KBM-7 (cell line): ENCODE measurements at regions of chr13 and their contacts with region 1.

Region 1: DNA sequence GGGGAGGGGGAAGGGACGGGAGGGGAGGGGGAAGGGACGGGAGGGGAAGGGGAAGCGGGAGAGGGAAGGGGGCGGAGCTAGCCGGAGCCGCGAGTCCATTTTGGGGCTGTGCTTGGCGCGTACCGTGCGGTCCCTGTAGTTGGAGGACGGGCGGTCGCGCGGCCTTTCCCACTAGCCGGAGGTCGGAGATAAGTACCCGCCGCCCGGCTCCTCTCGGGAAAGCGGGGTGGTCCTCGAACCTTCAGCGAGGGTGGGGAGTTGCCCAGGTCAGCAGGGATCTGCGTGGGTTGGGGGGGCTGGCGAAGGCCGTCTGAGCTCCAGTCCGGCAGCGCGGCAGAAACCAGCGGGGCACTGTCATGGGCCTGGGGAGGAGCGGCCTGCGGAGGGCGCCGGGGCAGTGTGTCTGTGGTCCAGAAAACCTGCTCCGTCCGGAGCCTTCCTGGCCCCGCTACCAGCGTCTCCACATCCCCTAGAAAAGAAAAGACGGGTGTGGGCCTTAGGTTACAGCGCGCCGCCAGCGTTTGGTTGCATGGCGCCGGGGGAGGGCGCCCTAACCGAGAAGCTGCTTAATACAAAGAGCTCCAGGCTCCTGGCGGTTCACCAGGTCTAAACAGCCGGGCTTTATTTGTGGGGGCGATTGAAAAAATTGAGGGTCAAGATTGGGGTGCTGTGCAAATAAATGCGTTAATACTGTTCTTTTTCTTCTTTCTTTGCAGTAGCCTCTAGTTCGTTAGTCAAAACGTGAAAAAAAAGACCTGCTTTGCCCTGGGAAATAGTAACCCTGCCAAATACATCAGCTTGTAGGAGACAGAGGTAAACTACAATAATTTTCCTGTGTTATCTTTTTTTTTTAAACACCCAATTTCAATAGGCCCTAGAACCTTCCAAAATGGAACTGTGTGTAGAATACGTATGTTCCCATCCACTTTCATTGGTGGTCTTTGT is at the start of gene TRIM13:
- DNase-seq: peak; percentile 92

Region 2: DNA sequence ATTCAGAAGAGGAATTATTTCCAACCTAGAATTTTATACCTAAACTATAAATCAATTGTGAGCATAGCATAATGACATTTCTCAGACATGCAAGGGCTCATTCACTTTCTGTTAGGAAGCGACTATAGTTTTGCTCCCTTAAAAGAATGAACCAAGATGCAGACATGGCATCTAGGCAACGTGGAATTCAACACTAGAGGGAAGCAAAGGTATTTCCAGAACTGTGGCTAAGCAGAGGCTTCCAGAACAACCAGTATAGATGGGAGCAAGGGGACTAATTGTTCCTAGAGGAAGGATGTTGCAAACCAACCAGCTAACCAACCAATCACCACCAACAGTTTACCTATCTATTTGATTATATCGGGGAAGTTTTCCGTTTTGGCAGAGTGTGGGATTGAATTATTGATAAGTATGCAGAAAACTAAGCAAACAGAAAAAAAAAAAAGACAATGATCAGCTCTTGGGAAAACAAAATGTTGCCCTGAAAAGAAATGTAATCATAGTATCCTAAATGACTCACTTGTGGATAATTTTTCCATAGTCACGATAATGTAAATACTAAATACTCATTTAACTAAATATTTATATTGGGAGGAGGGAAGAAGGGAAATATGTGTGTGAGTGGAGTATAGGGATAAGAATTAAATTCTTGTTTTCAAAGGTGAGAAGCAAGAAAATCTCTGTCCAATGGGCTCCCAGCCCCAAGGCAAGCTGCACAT is 347.8 kb before region 1 on chr13:
- in situ Hi-C with region 1: no loop called
- DNase-seq: peak; percentile 32

Region 3: DNA sequence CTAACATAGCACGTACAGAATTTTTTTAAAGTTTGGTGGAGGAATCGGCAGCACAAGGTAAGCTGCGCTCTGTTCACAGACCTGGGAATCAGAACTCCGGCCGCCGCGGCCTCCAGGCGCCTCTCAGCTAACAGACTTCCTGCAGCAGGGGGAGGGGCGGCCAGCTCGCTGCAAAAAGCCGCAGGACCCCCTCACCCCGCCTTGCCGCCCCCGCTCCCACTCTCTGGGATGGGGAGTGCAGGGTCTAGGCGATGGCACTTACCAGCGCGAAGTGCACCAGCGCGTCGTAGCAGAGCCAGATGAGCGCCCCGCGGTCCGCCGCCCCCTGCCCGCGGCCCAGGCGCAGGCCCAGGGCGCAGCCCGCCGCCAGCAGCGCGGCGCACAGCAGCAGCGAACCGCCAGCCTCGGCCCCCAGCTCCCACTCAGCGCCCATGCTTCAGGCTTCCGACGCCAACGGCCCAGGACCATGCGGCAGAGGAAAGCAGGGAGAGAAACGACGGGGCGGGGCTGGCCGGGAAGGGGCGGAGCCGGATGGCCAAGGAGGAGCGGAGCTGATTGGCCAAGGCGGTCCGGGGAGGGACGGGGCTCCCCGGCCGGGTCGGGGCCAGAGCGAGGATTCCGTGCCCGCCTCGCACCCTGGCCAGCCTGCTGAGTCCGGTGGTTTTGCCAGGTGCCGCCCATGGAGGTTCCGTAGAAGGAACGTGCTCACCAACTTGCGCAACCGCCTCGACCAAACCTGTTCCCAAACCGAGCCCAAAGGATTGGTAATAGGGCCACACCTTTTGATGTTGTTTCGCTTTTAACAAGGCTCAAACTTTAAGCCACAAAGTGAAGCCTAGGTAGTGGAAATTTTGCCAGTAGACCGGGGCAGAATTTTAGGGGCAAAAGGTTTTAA is 306.0 kb before region 1 on chr13 and contains the start of gene EBPL:
- in situ Hi-C with region 1: no loop called
- DNase-seq: peak; percentile 96

Region 4: DNA sequence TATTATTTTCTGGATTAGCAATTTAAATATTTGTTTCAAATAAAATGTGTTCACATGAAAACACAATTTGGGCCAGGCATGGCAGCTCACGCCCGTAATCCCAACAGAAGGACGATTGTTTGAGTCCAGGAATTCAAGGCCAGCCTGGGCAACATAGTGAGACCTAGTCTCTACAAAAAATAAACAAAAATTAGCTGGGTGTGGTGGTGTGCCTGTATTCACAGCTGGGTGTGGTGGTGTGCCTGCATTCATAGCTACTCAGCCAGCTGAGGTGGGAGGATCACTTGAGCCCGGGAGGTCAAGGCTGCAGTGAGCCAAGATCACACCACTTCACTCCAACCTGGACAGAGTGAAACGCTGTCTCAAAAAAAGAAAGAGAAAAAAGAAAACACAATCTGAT is 251.1 kb before region 1 on chr13:
- in situ Hi-C with region 1: no loop called
- DNase-seq: no peak

Region 5: GRCh38 chr13:50344717-50345116 is 347.5 kb after region 1 on chr13:
- in situ Hi-C with region 1: no loop called
- DNase-seq: no peak

Region 6: DNA sequence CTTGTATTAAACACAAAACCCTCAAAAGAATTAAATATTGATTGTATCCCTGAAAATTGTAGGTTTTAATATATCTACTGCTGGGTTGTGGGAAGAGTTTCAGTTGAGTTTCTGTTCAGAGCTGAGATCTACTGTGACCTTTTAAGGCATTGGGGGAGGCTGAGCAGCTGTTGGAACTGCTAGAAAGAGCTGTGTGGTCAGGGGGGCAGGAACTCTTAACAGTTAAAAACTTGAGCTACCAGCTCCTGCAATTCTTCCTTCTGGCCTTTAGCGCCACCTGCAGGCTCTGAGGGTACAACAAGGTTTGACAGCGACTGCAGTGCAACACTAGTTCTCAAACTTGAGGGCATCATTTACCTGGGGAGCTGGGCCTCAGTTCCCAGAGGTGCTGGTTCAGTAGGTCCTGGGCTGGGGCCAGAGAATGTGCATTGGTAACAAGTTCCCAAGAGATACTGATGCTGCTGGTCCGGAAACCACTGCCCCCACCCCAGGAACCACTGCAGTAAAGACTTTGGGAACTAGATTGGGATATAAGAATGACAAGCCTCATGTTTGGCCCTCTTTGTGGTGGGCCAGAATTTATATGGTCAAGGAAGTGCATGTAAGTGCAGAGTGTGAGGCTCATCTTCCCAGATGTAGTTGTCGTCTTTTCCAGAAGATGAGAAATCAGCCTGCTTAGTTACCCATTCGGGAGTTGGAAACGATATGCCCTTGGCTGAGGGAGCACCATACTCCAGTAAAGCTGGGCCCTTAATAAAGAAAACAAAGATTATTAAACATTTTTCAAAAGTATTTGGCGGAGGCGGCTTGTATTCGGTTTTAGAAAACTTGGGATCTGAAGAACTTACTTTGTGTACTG is 914.9 kb after region 1 on chr13:
- in situ Hi-C with region 1: loop called (anchors 25 kb)
- DNase-seq: peak; percentile 94

Region 7: GRCh38 chr13:51070005-51070649 is 1072.9 kb after region 1 on chr13:
- in situ Hi-C with region 1: loop called (anchors 25 kb)
- DNase-seq: peak; percentile 78